ENCODE measurements at regions of chr11 and their contacts with region 1.

Region 1: GRCh38 chr11:128290106-128290840 is 297.1 kb downstream of the ETS1 start:
- DNase-seq: peak; percentile 76
- H3K4me3 Mint-ChIP-seq: peak overlapping the region; percentile 90
- H3K27ac Mint-ChIP-seq: peak overlapping the region; percentile 98
- H3K4me1 Mint-ChIP-seq: peaks cover 100% of the 10 kb centered on the region
- H3K27me3 Mint-ChIP-seq: peaks cover 1% of the 10 kb centered on the region

Region 2: DNA sequence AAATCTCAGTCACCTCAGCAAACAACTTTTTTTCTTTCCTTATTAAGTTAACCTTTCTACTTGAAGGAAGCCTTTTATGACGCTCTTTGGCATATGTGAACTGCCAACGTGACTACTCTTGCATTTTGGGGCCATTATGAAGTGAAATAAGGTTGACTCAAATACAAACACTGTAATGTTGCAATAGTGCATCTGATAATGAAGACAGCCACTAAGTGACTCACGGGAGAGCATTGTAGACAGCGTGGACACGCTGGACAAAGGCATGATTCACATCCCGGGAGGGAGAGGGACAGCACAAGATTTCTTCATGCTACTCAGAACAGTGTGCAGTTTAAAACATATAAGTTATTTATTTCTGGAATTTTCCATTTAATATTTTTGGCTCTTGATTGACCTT is 263.7 kb before region 1 on chr11:
- intact Hi-C with region 1: loop called (anchors 1 kb)
- DNase-seq: no peak
- H3K4me3 Mint-ChIP-seq: no peak overlapping the region
- H3K27ac Mint-ChIP-seq: no peak overlapping the region
- H3K4me1 Mint-ChIP-seq: peaks cover 4% of the 10 kb centered on the region
- H3K27me3 Mint-ChIP-seq: peaks cover 42% of the 10 kb centered on the region

Region 3: DNA sequence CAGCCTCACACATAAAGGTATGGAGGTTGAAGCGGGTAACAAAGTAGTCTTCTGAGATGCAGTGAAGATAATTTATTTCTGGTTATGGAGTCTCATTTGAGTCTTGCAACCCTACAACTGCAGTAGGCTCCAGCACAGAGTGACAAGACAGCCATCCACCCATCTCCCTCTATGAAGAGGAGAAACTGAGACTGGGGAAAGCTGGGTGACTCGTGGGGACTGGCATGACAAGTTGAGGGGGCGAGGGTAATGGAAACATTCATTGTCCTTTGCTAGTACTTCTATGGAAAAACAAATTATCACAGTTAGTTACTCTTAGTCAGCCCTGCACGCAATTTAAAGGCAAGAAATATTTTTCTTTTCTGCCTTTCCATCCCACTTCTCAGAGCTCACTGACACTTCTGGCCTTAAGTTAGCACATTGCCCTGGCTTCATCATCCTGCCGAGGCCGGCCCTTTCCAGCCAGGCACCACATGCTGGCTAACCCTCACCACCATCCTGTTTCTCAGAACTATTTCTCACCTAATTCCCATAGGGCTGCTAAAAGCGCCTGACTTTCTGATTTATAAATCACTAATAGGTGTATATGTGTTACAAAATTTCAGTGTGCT is 64.1 kb before region 1 on chr11:
- intact Hi-C with region 1: loop called (anchors 1 kb)
- DNase-seq: no peak
- H3K4me3 Mint-ChIP-seq: peak overlapping the region; percentile 37
- H3K27ac Mint-ChIP-seq: peak overlapping the region; percentile 89
- H3K4me1 Mint-ChIP-seq: peaks cover 44% of the 10 kb centered on the region
- H3K27me3 Mint-ChIP-seq: no peaks in the 10 kb centered on the region

Region 4: DNA sequence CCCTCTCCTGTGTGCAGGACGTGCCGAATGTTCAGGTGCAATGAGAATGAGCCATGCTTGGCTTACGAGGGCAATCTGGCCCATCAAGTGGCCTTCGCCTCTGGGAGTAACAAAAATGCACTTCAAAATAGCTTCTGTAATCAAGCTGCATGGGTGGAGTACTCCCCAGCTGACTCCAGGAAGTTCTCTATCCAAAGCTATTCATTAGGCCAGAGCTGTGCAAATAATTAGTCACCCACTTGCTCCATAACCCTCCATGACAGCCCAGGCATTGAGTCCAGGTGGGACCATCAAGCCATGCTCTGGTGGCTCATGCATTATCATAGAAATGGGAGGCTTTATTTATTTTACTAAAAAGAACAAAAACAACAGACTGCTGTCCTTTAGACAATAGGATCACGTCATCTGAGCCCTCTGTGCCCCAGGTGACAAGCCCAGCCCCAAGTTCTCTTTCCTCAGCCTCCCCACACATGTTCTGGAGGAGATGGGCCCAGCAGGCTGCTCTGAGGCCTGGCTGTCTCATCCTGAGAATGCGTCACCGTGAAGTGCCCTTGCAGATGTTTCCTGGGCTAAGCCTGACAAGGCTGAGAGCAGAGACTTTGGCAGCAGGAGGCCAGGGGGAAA is 52.4 kb after region 1 on chr11:
- intact Hi-C with region 1: loop called (anchors 1 kb)
- DNase-seq: peak; percentile 70
- H3K4me3 Mint-ChIP-seq: peak overlapping the region; percentile 76
- H3K27ac Mint-ChIP-seq: peak overlapping the region; percentile 85
- H3K4me1 Mint-ChIP-seq: peaks cover 92% of the 10 kb centered on the region
- H3K27me3 Mint-ChIP-seq: no peaks in the 10 kb centered on the region

Region 5: DNA sequence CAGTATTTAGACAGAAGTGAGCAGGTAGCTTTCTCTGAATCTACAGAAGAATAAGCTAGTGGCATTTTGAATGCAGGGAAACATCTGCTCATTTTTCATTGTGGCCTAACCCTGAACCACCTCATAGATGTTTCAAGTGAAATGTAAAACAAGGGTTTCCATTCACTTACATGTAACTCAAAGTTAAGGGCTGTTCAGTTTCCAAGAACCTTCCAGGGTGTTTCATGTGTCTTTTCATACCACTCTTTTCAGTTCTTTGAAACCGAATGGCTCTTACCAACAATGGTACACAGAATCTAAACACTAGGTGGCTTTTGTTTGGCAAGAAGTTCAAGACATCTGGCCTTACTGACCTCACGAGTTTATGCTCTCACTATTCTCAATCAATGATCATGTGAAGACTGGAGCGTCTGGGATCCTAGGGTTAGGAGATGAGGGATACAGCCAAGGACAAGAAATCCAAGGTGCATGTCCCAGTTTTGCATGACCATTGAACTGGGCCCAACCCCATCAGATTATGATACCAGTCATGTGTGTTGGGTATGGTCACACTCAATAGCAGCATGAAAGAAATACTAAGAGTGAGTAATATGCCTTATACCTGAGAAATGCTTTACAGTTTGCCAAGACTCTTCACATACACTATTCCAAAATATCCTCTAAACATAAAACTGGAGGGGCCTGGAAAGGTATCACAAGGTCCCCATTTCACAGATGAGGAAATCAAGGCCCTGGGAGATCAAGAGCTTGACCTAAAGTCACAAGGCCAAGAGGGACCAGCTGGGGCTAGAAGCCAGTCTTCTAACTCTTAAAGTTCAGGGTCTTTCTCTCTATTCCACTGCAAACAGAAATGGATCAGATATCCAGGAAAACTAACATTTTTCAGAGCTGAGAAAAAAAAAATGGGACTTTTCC is 204.4 kb after region 1 on chr11:
- intact Hi-C with region 1: loop called (anchors 1 kb)
- DNase-seq: no peak
- H3K4me3 Mint-ChIP-seq: peak overlapping the region; percentile 74
- H3K27ac Mint-ChIP-seq: peak overlapping the region; percentile 98
- H3K4me1 Mint-ChIP-seq: peaks cover 98% of the 10 kb centered on the region
- H3K27me3 Mint-ChIP-seq: no peaks in the 10 kb centered on the region

Region 6: GRCh38 chr11:128630367-128631230 is 340.3 kb after region 1 on chr11:
- intact Hi-C with region 1: loop called (anchors 1 kb)
- DNase-seq: peak; percentile 81
- H3K4me3 Mint-ChIP-seq: peak overlapping the region; percentile 76
- H3K27ac Mint-ChIP-seq: peak overlapping the region; percentile 96
- H3K4me1 Mint-ChIP-seq: peaks cover 76% of the 10 kb centered on the region
- H3K27me3 Mint-ChIP-seq: peaks cover 4% of the 10 kb centered on the region

Region 7: DNA sequence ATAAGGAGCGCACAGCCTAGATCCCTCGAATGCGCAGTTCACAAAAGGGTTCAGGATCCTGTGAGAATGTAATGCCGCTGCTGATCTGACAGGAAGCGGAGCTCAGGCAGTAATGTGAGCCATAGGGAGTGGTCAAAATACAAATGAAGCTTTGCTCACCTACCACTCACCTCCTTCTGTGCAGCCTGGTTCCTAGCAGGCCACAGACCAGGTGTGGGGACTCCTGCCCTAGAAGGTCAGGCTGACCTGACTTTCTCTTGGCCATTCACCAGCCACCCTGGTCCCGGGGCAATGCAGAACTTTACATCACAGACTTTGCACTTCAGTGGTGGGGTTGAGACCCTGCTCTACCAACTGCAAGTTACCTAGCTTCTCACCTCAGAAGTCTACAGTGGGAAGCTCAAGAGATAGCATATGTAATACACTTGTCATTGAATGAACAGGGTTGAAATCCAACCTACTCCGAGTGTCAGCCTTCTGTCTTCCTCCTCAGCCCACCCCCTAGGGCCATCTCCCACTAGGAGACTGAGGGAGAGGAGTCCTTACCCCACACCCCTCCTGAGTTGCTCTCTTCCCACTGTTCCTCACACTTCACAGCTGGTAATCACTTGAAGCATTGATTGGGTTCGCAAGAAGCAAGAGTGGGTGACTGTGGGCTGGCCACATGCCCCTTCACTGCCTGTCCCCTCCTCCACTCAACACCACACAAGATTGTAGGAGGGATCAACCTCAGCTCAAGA is 578.7 kb after region 1 on chr11:
- intact Hi-C with region 1: loop called (anchors 5 kb)
- DNase-seq: no peak
- H3K4me3 Mint-ChIP-seq: no peak overlapping the region
- H3K27ac Mint-ChIP-seq: no peak overlapping the region
- H3K4me1 Mint-ChIP-seq: no peaks in the 10 kb centered on the region
- H3K27me3 Mint-ChIP-seq: peaks cover 13% of the 10 kb centered on the region

Measured in activated T-helper 1 cell treated with anti-CD3 and anti-CD28 coated beads, Interleukin-12 subunit alpha, Interleukin-12 subunit beta, Interleukin-2, Interleukin-4 antibody, amounts not matched to agents 30 ng/mL and 10 ng/mL and 1 ng/mL, durations not matched to agents 14 hours and 24 hours and 36 hours (primary cell).